Colonic mucosa (tissue), 4 donors: ENCODE measurements at regions of chr6 and their contacts with region 1.

Region 1: GRCh38 chr6:1335367-1336037 is 23.6 kb downstream of the FOXQ1 start:
- DNase-seq: peak; percentile 69
- H3K4me3 ChIP-seq: no peak overlapping the region
- H3K27ac ChIP-seq: no peak overlapping the region
- H3K4me1 ChIP-seq: no peaks in the 10 kb centered on the region
- H3K27me3 ChIP-seq: peaks cover 7% of the 10 kb centered on the region
- CTCF ChIP-seq: no peak

Region 2: DNA sequence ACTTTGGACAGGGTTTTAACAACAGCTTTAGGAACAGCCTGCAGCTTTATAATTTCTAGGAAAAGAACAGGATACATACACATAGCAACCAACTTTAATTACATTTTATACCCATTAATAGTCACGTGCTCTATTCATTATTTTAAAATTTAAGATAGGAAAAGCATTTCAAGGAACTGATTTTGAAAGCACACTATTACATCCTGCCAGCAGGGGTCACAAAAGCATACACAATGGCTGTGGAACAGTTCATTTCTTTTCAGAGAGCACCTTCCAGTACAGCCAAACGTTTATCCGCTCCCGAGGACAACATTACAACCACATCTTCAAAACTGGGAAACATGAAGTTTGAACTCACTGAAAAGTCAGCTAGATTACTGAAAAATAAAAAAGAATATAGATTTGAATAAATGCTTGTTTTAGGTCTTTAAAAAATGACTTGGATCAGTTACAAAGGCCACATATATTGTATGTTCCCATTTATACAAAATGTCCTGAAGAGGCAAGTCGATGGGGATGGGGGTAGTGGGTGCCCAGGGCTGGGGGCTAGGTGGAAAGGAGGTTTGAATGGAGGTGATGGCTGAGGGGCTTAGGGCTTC is 537.9 kb before region 1 on chr6:
- intact Hi-C with region 1: loop called (anchors 5 kb)
- DNase-seq: peak; percentile 60
- H3K4me3 ChIP-seq: no peak overlapping the region
- H3K27ac ChIP-seq: no peak overlapping the region
- H3K4me1 ChIP-seq: no peaks in the 10 kb centered on the region
- H3K27me3 ChIP-seq: no peaks in the 10 kb centered on the region
- CTCF ChIP-seq: peak; percentile 61

Region 3: DNA sequence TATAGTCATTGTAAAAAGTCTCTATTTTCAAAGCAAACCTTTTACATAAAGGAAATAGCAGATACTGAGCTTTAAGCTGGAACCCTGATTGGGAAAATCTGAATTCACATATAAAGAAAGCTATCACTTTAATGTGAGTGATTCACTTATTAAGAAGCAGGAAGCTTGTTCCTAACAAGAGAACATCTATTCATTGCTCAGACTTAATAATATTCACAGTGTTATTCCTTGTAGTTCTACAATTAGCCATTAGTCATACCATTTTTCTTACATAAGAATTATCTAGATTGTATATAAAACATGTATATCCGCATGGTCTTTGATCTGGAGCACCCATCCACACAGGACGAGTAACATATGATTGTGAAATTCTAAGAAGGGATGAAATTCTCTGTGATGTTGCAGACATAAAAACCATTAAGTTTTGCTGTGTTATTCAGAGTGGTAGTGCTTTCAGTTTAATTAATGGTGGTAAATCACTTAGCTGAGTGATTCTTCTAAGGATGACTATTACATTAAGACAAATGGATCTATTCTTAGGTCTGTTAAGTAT is 94.7 kb before region 1 on chr6:
- intact Hi-C with region 1: no loop called
- DNase-seq: no peak
- H3K4me3 ChIP-seq: no peak overlapping the region
- H3K27ac ChIP-seq: no peak overlapping the region
- H3K4me1 ChIP-seq: no peaks in the 10 kb centered on the region
- H3K27me3 ChIP-seq: no peaks in the 10 kb centered on the region
- CTCF ChIP-seq: no peak

Region 4: GRCh38 chr6:1498491-1499113 is 163.1 kb after region 1 on chr6:
- intact Hi-C with region 1: no loop called
- DNase-seq: no peak
- H3K4me3 ChIP-seq: no peak overlapping the region
- H3K27ac ChIP-seq: no peak overlapping the region
- H3K4me1 ChIP-seq: no peaks in the 10 kb centered on the region
- H3K27me3 ChIP-seq: no peaks in the 10 kb centered on the region
- CTCF ChIP-seq: no peak